ENCODE measurements at regions of chr15 and their contacts with region 1.

Region 1: DNA sequence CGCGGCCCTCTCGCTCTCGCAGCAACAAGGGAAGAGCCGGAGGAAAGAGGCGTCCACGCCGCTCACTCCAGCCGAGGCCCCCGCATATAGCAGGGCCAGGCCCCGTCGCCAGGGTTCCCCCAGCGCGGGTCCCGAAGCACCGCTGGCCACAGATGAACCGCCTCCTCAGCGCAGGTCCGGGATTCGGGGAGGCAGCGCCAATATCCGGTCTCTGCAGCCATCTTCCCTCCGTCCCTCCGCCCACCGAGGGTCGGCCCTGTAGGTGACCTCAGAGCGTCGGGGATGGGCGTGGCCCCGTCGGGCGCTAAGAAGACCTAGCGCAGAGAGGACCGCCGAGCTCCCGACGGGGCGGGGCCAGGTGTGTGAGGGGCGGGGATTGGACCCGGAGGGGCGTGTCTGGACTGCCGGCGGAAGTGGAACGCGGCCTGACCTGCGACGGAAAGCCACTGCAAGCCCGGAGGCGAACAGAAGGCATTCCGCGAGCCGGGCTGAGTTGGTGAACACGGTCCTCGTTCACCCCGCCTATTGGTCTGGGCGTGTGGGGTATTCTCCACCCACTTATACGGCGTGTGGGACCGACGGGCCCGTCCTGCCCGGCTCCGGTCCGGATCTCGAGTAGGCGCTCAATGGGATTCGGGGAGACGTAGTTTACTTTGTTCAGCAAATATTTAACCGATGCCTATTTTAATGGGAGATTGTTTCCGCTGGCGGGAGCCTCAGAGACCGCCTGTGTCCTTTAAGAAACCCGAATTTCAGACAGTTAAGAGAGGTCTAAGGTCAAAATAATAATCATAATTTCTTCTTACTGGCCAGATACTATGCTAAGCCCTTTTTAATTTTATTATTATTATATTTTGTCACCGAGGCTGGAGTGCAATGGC is 26.9 kb upstream of the MTHFS start:
- DNase-seq: peak; percentile 93
- H3K4me3 ChIP-seq: peak overlapping the region; percentile 87 to 96 (median 92)
- H3K27ac ChIP-seq: peak overlapping the region; percentile 52
- H3K4me1 ChIP-seq: peaks cover 10% of the 10 kb centered on the region
- H3K27me3 ChIP-seq: no peaks in the 10 kb centered on the region
- CTCF ChIP-seq: no peak
- POLR2A ChIP-seq: peak; percentile 85

Region 2: GRCh38 chr15:79640206-79640605 is 283.5 kb before region 1 on chr15:
- CTCF ChIA-PET with region 1: no interaction called
- POLR2A ChIA-PET with region 1: no interaction called
- dilution Hi-C with region 1: no loop called
- intact Hi-C with region 1: loop called (anchors 5 kb)
- DNase-seq: peak; percentile 74
- H3K4me3 ChIP-seq: no peak overlapping the region
- H3K27ac ChIP-seq: peak overlapping the region; percentile 15
- H3K4me1 ChIP-seq: peaks cover 33% of the 10 kb centered on the region
- H3K27me3 ChIP-seq: no peaks in the 10 kb centered on the region
- CTCF ChIP-seq: no peak
- POLR2A ChIP-seq: no peak

Region 3: DNA sequence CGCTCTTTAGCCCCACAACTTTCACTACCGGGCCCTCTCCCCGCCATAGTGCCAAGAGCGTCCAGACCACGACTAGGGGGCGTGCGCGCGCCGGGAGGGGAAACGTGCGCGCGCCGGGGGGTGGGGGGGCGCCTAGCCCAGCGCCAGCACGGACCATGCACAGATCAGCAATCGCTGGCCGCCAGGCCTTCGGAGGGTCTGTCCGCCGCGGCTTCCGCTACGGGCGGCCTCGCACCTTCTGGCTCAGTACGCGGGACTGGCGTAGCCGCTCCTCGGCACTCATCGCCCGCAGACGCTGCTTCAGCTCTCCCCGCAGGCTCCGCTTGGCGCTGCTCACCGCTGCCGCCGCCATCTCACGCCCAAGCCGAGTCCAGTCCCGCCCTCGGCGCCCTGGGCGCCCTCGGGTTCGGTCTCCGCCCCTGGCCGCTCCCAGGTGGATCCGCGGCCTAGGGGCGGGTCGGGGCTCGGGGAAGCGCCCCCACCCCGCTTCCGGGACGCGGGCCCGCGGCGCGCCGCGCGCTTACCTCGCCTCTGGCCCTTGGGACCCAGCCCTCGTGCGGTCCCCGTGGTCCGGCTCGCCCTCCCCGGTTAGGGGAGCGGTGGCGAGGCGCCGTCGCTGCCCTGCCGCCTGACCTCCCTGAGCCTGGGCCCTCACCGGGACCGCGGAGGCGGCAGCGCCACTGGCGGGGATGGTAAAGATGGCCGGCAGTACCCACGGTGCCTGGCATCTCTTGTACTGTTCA is 26.9 kb before region 1 on chr15 and contains the start of gene MTHFS:
- CTCF ChIA-PET with region 1: no interaction called
- POLR2A ChIA-PET with region 1: no interaction called
- dilution Hi-C with region 1: no loop called
- intact Hi-C with region 1: loop called (anchors 1 kb)
- DNase-seq: peak; percentile 73
- H3K4me3 ChIP-seq: peak within 1 kb of the TSS in 2 of 3 experiments; percentile 53 to 77
- H3K27ac ChIP-seq: peak within 1 kb of the TSS; percentile 46
- H3K4me1 ChIP-seq: peaks cover 8% of the 10 kb centered on the region
- H3K27me3 ChIP-seq: no peaks in the 10 kb centered on the region
- CTCF ChIP-seq: peak; percentile 42 to 65
- POLR2A ChIP-seq: peak; percentile 66
- total RNA-seq, gene MTHFS: 9.9 and 15.7 TPM in 2 replicates

Region 4: GRCh38 chr15:79989682-79990081 is 65.9 kb after region 1 on chr15:
- CTCF ChIA-PET with region 1: interaction called, 3 read pairs
- POLR2A ChIA-PET with region 1: no interaction called
- dilution Hi-C with region 1: no loop called
- intact Hi-C with region 1: loop called (anchors 2 kb)
- DNase-seq: no peak
- H3K4me3 ChIP-seq: no peak overlapping the region
- H3K27ac ChIP-seq: no peak overlapping the region
- H3K4me1 ChIP-seq: no peaks in the 10 kb centered on the region
- H3K27me3 ChIP-seq: peaks cover under 1 to 3% of the 10 kb centered on the region in 2 experiments
- CTCF ChIP-seq: no peak
- POLR2A ChIP-seq: no peak

Region 5: DNA sequence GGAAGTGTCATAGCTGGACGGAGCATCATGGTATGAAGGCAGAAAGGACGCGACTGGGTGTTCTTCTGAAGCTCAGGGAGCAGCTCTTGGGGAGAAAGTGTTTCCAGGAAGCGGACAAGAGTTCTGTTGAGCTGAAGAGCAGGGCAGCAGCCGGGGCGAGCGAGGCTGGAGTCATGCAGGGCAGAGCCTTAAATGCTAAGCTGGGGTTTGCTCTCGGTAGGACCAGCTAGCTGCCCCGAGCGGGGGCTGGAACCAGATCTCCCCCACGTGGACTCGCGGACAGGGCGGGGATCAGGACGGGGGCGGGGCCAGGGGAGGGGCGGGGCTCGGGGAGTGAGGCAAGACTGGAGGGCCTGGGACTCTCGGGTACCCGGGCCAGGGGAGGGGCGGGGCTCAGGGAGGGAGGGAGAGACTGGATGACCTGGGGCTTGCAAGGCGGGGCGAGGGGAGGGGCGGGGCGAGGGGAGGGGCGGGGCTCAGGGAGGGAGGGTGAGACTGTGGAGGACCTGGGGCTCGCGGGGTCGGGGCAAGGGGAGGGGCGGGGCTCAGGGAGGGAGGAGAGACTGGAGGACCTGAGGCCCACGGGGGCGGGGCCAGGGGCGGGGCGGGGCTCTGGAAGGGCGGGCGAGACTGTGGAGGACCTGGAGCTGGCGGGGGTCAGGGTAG is 228.6 kb after region 1 on chr15:
- CTCF ChIA-PET with region 1: no interaction called
- POLR2A ChIA-PET with region 1: no interaction called
- dilution Hi-C with region 1: no loop called
- intact Hi-C with region 1: loop called (anchors 1 kb)
- DNase-seq: peak; percentile 86
- H3K4me3 ChIP-seq: peak overlapping the region in 2 of 3 experiments; percentile 17 to 75
- H3K27ac ChIP-seq: no peak overlapping the region
- H3K4me1 ChIP-seq: peaks cover 9% of the 10 kb centered on the region
- H3K27me3 ChIP-seq: peaks cover 0 to 2% of the 10 kb centered on the region in 2 experiments
- CTCF ChIP-seq: no peak
- POLR2A ChIP-seq: no peak

Measured in endothelial cell of umbilical vein (primary cell).